CD4-positive, alpha-beta T cell (primary cell): ENCODE measurements at regions of chrX and their contacts with region 1.

Region 1: GRCh38 chrX:38327007-38327774 is at the start of gene RPGR:
- DNase-seq: peak; percentile 83 to 95 (median 87)
- ATAC-seq: peak; percentile 98
- H3K4me3 ChIP-seq: peak within 1 kb of the TSS; percentile 66
- H3K4me3 Mint-ChIP-seq: peak within 1 kb of the TSS; percentile 98
- H3K27ac ChIP-seq: peak within 1 kb of the TSS; percentile 66 to 73
- H3K27ac Mint-ChIP-seq: peak within 1 kb of the TSS; percentile 88
- H3K4me1 ChIP-seq: peaks cover 13% of the 10 kb centered on the region
- H3K4me1 Mint-ChIP-seq: peaks cover 29% of the 10 kb centered on the region
- H3K27me3 ChIP-seq: no peaks in the 10 kb centered on the region
- H3K27me3 Mint-ChIP-seq: no peaks in the 10 kb centered on the region
- CTCF ChIP-seq: peak; percentile 65
- total RNA-seq, gene RPGR: 17.1 to 18.2 TPM

Region 2: DNA sequence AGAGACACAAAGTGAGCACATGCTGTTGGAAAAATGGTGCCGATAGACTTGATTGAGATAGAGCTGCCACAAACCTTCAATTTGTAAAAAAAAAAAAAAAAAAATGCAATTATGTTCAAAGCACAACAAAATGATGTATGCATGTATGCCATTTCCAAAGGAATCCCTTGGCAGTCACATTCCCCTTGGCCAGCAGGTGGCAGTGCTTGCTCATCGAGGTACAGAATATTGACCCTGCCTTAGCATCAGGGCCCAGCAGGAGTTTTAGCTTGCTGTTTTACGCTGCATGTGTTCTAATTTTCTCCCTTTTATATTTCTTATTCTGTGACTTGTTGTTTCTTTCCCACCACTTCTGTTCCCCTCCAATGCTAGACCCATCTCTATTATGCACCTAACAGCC is 581.8 kb before region 1 on chrX:
- CTCF ChIA-PET with region 1: interaction called, 11 read pairs
- POLR2A ChIA-PET with region 1: no interaction called
- intact Hi-C with region 1: loop called (anchors 10 kb)
- DNase-seq: peak; percentile 57 to 85 (median 72)
- ATAC-seq: peak; percentile 84
- H3K4me3 ChIP-seq: no peak overlapping the region
- H3K4me3 Mint-ChIP-seq: peak overlapping the region; percentile 4
- H3K27ac ChIP-seq: no peak overlapping the region
- H3K27ac Mint-ChIP-seq: no peak overlapping the region
- H3K4me1 ChIP-seq: peaks cover 15% of the 10 kb centered on the region
- H3K4me1 Mint-ChIP-seq: peaks cover 14% of the 10 kb centered on the region
- H3K27me3 ChIP-seq: no peaks in the 10 kb centered on the region
- H3K27me3 Mint-ChIP-seq: no peaks in the 10 kb centered on the region
- CTCF ChIP-seq: peak; percentile 66

Region 3: GRCh38 chrX:37846934-37847732 is 480.1 kb before region 1 on chrX and contains the start of gene DYNLT3:
- CTCF ChIA-PET with region 1: no interaction called
- POLR2A ChIA-PET with region 1: no interaction called
- intact Hi-C with region 1: loop called in 1 of 2 experiments (anchors 5 kb)
- DNase-seq: peak; percentile 51 to 92 (median 71)
- ATAC-seq: peak; percentile 92
- H3K4me3 ChIP-seq: peak within 1 kb of the TSS; percentile 78
- H3K4me3 Mint-ChIP-seq: peak within 1 kb of the TSS; percentile 89
- H3K27ac ChIP-seq: peak within 1 kb of the TSS; percentile 83 to 94
- H3K27ac Mint-ChIP-seq: peak within 1 kb of the TSS; percentile 97
- H3K4me1 ChIP-seq: peaks cover 20% of the 10 kb centered on the region
- H3K4me1 Mint-ChIP-seq: peaks cover 52% of the 10 kb centered on the region
- H3K27me3 ChIP-seq: no peaks in the 10 kb centered on the region
- H3K27me3 Mint-ChIP-seq: no peaks in the 10 kb centered on the region
- CTCF ChIP-seq: no peak
- total RNA-seq, gene DYNLT3: 47.9 to 48.3 TPM

Region 4: DNA sequence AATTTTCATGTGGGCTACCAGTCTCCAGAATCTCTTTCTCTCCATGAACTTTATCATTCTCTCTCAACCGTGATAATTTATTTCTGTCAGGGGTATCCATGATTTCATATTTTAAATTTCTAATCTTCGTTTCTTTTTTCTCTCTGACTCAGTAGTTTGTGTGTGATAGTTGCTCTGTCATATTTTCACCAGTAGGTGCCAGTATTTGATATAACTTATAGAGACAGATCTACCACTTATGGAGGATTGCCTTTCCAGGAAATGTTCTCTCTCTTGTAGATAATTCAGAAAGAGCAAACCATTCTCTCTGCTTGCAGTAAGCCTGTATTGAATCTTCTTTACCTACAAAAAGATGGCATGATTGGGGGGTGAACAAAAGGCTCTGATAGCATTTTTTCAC is 400.5 kb before region 1 on chrX:
- CTCF ChIA-PET with region 1: no interaction called
- POLR2A ChIA-PET with region 1: no interaction called
- intact Hi-C with region 1: loop called in 1 of 2 experiments (anchors 5 kb)
- DNase-seq: peak in 3 of 14 experiments; percentile 33 to 37 (median 34)
- ATAC-seq: no peak
- H3K4me3 ChIP-seq: no peak overlapping the region
- H3K4me3 Mint-ChIP-seq: no peak overlapping the region
- H3K27ac ChIP-seq: no peak overlapping the region
- H3K27ac Mint-ChIP-seq: no peak overlapping the region
- H3K4me1 ChIP-seq: no peaks in the 10 kb centered on the region
- H3K4me1 Mint-ChIP-seq: no peaks in the 10 kb centered on the region
- H3K27me3 ChIP-seq: no peaks in the 10 kb centered on the region
- H3K27me3 Mint-ChIP-seq: peaks cover 5% of the 10 kb centered on the region
- CTCF ChIP-seq: peak; percentile 29

Region 5: DNA sequence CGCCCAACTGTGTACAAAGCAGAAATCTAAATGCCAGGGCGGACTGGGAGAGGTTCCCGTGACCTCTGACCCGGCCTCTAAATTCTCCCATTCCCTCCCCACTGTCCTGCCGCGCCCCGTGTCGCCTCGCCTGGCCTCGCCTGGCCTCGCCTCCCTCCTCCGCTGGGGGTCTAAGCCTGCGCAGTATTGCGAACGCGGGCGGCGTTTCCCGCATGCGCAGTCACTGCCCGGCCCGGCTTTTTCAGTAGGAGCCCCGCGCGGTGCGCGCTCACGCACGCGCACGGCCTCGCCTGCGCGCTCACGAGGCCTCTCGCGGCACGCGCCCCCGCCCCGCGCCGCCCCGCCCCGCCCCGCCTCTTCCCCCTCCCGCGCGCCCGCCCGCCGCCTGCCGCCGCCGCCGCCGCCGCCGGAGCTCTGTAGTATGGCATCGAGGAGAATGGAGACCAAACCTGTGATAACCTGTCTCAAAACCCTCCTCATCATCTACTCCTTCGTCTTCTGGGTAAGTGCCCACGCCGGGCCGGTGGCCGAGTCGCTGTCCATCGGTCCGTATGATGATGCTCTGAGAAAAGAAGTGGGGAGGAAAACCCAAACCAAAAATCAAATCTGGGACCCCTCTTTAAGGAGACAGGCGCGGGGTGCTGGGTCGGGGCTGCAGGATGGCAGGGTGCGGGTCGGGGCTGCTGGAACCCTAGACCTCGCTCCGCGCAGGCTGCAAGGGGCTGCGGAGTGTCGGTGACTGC is 234.1 kb after region 1 on chrX and contains the start of gene TSPAN7:
- CTCF ChIA-PET with region 1: no interaction called
- POLR2A ChIA-PET with region 1: interaction called, 4 read pairs
- intact Hi-C with region 1: loop called in 1 of 2 experiments (anchors 5 kb)
- DNase-seq: peak; percentile 48 to 89 (median 76)
- ATAC-seq: peak; percentile 83
- H3K4me3 ChIP-seq: peak within 1 kb of the TSS; percentile 62
- H3K4me3 Mint-ChIP-seq: peak within 1 kb of the TSS; percentile 90
- H3K27ac ChIP-seq: no peak within 1 kb of the TSS
- H3K27ac Mint-ChIP-seq: peak within 1 kb of the TSS; percentile 39
- H3K4me1 ChIP-seq: peaks cover 14% of the 10 kb centered on the region
- H3K4me1 Mint-ChIP-seq: no peaks in the 10 kb centered on the region
- H3K27me3 ChIP-seq: no peaks in the 10 kb centered on the region
- H3K27me3 Mint-ChIP-seq: no peaks in the 10 kb centered on the region
- CTCF ChIP-seq: no peak
- total RNA-seq, gene TSPAN7: 0.36 TPM in 1 of 2 experiments, not detected in the other

Region 6: DNA sequence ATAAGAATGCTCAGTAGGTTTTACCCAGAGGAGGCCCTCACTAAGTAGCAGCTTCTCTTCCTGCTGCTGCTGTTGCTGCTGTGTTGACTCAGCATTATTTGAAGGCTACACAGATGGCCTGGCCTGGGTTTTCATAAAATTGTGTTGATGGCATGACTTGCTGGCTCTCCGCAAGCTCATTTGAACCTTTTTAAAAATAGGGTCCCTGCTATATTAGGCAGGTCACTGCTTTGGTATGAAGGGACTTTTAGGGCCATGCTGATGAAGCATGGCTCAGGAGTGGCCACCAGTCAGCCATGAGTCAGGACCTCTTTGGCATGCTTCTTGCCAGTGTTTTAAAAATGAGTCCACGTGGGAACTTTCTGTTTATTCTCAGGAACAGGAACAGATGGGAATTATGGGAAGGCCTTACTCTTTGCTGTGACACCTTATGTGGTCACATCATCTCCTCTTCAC is 602.8 kb after region 1 on chrX:
- CTCF ChIA-PET with region 1: no interaction called
- POLR2A ChIA-PET with region 1: no interaction called
- intact Hi-C with region 1: no loop called
- DNase-seq: peak in 1 of 14 experiments; percentile 4
- ATAC-seq: no peak
- H3K4me3 ChIP-seq: no peak overlapping the region
- H3K4me3 Mint-ChIP-seq: no peak overlapping the region
- H3K27ac ChIP-seq: no peak overlapping the region
- H3K27ac Mint-ChIP-seq: no peak overlapping the region
- H3K4me1 ChIP-seq: no peaks in the 10 kb centered on the region
- H3K4me1 Mint-ChIP-seq: no peaks in the 10 kb centered on the region
- H3K27me3 ChIP-seq: no peaks in the 10 kb centered on the region
- H3K27me3 Mint-ChIP-seq: no peaks in the 10 kb centered on the region
- CTCF ChIP-seq: no peak